ENCODE measurements at regions of chr4 and their contacts with region 1.

Region 1: DNA sequence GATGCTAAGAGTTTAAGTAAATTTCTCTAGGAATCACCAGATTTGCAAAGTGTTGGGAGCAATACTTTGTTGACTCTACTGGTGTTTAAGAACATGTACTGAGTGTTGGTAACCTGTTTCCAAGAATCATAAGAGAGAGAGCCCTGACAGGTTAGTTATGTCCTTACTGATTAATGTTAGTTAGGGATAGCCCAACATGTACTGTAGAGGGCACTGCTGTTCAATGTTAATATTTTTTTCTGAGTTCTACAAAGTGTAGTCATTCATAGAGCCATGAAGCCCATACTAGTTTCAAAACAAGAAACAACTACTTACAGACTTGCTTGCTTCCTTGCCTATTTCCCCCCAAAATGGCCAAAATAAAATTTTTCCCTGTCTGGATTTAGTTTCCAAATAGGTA is 11.9 kb downstream of the TMPRSS11D start:
- DNase-seq: peak; percentile 70
- H3K4me3 ChIP-seq: no peak overlapping the region
- H3K27ac ChIP-seq: no peak overlapping the region
- H3K4me1 ChIP-seq: peaks cover 9% of the 10 kb centered on the region; the same call in 1 of the 2 replicates
- H3K27me3 ChIP-seq: no peaks in the 10 kb centered on the region

Region 2: DNA sequence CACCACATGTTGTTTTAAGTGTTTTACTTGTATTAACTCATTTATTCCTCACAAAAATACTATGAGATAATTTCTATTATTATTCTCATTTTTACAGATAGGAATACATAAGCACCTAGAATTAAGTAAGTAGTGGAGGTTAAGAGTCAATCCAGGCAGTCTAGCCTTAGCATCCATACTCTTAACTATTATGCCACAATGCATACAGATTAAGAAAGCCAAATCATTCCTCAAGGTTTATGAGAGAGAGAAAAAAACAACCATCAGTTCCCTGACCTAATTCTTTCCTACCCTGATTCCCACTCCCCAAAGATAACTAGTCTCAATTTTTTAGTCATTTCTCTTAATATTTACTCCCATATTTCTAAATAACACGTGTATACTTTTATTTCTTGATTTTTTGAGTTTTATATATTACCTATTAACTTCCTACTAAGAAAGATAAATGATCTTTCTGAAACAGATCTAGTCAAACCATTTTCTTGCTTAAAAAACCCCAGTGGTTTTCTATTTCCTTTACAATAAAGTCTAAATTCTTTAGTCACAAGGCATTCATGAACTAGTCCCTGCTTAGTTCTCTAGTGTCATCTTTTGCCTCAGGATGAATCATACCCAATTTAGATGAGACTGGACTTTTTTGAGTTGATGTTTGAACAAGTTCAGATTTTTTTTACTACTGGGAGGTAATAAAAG is 186.9 kb before region 1 on chr4:
- in situ Hi-C with region 1: no loop called
- DNase-seq: peak; percentile 75
- H3K4me3 ChIP-seq: no peak overlapping the region
- H3K27ac ChIP-seq: peak overlapping the region; percentile 46
- H3K4me1 ChIP-seq: peaks cover 33% of the 10 kb centered on the region
- H3K27me3 ChIP-seq: no peaks in the 10 kb centered on the region

Region 3: GRCh38 chr4:68167706-68168105 is 295.8 kb after region 1 on chr4:
- in situ Hi-C with region 1: loop called (anchors 10 kb)
- DNase-seq: no peak
- H3K4me3 ChIP-seq: no peak overlapping the region
- H3K27ac ChIP-seq: no peak overlapping the region
- H3K4me1 ChIP-seq: no peaks in the 10 kb centered on the region
- H3K27me3 ChIP-seq: peaks cover 38% of the 10 kb centered on the region